ENCODE measurements at regions of chr5 and their contacts with region 1.

Region 1: GRCh38 chr5:119355685-119356611 is at the start of gene TNFAIP8:
- DNase-seq: peak; percentile 73
- H3K4me3 Mint-ChIP-seq: peak within 1 kb of the TSS; percentile 95
- H3K27ac Mint-ChIP-seq: peak within 1 kb of the TSS; percentile 79
- H3K4me1 Mint-ChIP-seq: peaks cover 44% of the 10 kb centered on the region
- H3K27me3 Mint-ChIP-seq: no peaks in the 10 kb centered on the region
- CTCF ChIP-seq: no peak
- total RNA-seq, gene TNFAIP8: 13.0 and 16.2 TPM in 2 replicates

Region 2: GRCh38 chr5:118987988-118988865 is 367.7 kb before region 1 on chr5 and contains the start of gene DTWD2:
- CTCF ChIA-PET with region 1: interaction called, 12 read pairs
- POLR2A ChIA-PET with region 1: interaction called, 10 read pairs
- intact Hi-C with region 1: loop called (anchors 1 kb)
- DNase-seq: peak; percentile 96
- H3K4me3 Mint-ChIP-seq: peak within 1 kb of the TSS; percentile 82
- H3K27ac Mint-ChIP-seq: peak within 1 kb of the TSS; percentile 73
- H3K4me1 Mint-ChIP-seq: peaks cover 34% of the 10 kb centered on the region
- H3K27me3 Mint-ChIP-seq: no peaks in the 10 kb centered on the region
- CTCF ChIP-seq: peak; percentile 86
- total RNA-seq, gene DTWD2: 10.1 and 10.5 TPM in 2 replicates

Region 3: GRCh38 chr5:119274767-119275130 is 81.2 kb before region 1 on chr5:
- CTCF ChIA-PET with region 1: interaction called, 5 read pairs
- POLR2A ChIA-PET with region 1: interaction called, 41 read pairs
- intact Hi-C with region 1: no loop called
- DNase-seq: peak; percentile 80
- H3K4me3 Mint-ChIP-seq: no peak overlapping the region
- H3K27ac Mint-ChIP-seq: peak overlapping the region; percentile 80
- H3K4me1 Mint-ChIP-seq: peaks cover 35% of the 10 kb centered on the region
- H3K27me3 Mint-ChIP-seq: no peaks in the 10 kb centered on the region
- CTCF ChIP-seq: no peak

Region 4: GRCh38 chr5:119315516-119315949 is 40.4 kb before region 1 on chr5:
- CTCF ChIA-PET with region 1: interaction called, 12 read pairs
- POLR2A ChIA-PET with region 1: interaction called, 9 read pairs
- intact Hi-C with region 1: no loop called
- DNase-seq: peak; percentile 82
- H3K4me3 Mint-ChIP-seq: no peak overlapping the region
- H3K27ac Mint-ChIP-seq: no peak overlapping the region
- H3K4me1 Mint-ChIP-seq: no peaks in the 10 kb centered on the region
- H3K27me3 Mint-ChIP-seq: no peaks in the 10 kb centered on the region
- CTCF ChIP-seq: peak; percentile 39

Region 5: GRCh38 chr5:119340597-119341218 is 15.2 kb before region 1 on chr5:
- CTCF ChIA-PET with region 1: interaction called, 161 read pairs
- POLR2A ChIA-PET with region 1: interaction called, 385 read pairs
- intact Hi-C with region 1: no loop called
- DNase-seq: no peak
- H3K4me3 Mint-ChIP-seq: no peak overlapping the region
- H3K27ac Mint-ChIP-seq: no peak overlapping the region
- H3K4me1 Mint-ChIP-seq: peaks cover 24% of the 10 kb centered on the region
- H3K27me3 Mint-ChIP-seq: no peaks in the 10 kb centered on the region
- CTCF ChIP-seq: no peak

Region 6: GRCh38 chr5:119397518-119398380 is 41.8 kb after region 1 on chr5:
- CTCF ChIA-PET with region 1: interaction called, 40 read pairs
- POLR2A ChIA-PET with region 1: interaction called, 492 read pairs
- intact Hi-C with region 1: loop called (anchors 1 kb)
- DNase-seq: peak; percentile 87
- H3K4me3 Mint-ChIP-seq: peak overlapping the region; percentile 63
- H3K27ac Mint-ChIP-seq: peak overlapping the region; percentile 94
- H3K4me1 Mint-ChIP-seq: peaks cover 48% of the 10 kb centered on the region
- H3K27me3 Mint-ChIP-seq: no peaks in the 10 kb centered on the region
- CTCF ChIP-seq: no peak

Region 7: GRCh38 chr5:119452373-119453039 is 96.6 kb after region 1 on chr5 and contains the start of gene HSD17B4:
- CTCF ChIA-PET with region 1: no interaction called
- POLR2A ChIA-PET with region 1: interaction called, 11 read pairs
- intact Hi-C with region 1: no loop called
- DNase-seq: peak; percentile 95
- H3K4me3 Mint-ChIP-seq: peak within 1 kb of the TSS; percentile 87
- H3K27ac Mint-ChIP-seq: peak within 1 kb of the TSS; percentile 82
- H3K4me1 Mint-ChIP-seq: peaks cover 13% of the 10 kb centered on the region
- H3K27me3 Mint-ChIP-seq: no peaks in the 10 kb centered on the region
- CTCF ChIP-seq: no peak
- total RNA-seq, gene HSD17B4: 163 and 169 TPM in 2 replicates

Measured in MCF 10A (cell line).